ENCODE measurements at regions of chr18 and their contacts with region 1.

Region 1: DNA sequence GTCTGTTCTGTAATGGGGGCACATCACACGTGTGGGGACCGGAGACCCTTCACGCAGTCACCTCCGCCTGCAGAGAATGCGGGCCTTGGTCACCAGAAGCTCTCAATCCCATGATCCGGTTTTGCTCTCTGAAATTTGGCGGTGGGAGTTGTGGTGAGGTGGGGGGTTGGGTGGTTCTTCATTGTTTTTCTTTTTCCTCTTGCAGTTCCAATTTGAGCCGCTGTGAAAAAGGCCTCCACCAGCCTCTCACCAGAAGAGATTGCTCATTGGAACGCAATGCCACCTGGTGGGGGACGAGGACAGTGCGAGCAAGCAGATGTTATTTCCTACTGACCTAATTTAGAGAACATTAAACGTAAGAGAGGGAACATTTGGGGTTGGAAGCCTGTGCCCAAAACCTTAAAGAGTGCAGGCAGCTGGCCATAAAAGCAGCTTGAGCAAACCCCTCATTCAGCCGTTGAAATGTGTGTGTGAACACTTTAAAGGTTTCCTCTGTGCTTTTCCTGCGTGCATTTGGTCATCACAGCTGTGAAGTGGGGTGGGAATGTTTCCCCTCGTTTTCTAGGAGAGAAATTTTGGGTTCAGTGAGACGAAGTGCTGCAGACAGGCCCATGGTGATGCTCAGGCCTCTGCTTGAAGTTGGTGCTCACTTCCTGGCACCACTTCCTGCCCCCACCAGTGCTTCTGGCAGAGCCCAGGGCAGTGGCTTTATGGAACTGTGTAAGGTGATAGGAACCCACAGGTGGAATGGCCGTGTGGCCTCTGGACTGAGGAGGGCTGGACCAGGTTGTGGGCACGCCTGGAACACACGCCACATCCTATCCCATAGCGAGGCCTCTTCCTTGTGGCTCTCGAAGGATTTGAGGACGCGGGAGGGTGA is 61.7 kb downstream of the ZCCHC2 start:
- DNase-seq: peak; percentile 82 to 87 (median 85)
- ATAC-seq: peak; percentile 79 to 88 (median 85)
- H3K4me3 ChIP-seq: peak overlapping the region in 5 of 12 donors; percentile 10 to 37 (median 19)
- H3K27ac ChIP-seq: peak overlapping the region in 6 of 12 donors; percentile 27 to 69 (median 41)
- H3K4me1 ChIP-seq: peaks cover 0 to 25% (median 12%) of the 10 kb centered on the region in 12 donors
- H3K27me3 ChIP-seq: no peaks in the 10 kb centered on the region
- CTCF ChIP-seq: peak; percentile 79 to 98 (median 93)
- POLR2A ChIP-seq: no peak

Region 2: DNA sequence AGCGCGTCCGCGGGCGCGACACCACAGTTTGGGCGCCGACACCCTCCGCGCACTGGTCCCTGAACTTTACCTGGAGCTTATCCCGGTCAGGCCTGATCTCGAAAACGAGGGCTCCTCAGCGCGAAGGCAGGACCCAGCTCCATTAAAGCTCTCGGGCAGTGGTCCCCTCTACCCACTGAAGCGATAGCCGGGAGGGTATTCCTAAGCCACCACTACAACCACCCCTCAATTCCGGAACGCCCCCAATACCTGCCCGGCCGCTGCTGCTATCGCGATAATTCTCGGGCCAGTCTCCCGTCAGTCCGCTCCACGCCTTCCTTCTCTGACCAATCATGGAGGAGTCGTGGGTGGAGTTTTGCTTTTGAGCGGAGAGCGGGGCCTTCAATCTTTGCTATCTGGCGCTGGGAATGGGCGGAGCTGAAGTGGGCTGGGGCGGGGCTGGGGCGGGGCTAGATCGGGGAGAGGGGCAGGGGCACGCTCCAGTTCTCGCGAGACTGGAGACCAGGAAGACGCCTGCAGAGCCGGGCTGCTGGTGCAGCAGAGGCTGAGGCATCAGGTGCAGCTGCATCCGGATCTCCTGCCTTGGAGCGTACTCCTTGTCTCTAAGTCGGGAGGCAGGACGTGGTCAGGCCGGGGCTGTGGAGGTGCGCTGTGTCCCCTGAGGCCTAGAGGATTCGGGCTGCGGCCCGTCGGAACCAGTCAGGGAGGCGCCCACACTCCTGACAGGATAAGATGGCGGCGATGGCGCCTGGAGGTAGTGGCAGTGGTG is 397.5 kb before region 1 on chr18 and contains the starts of genes PIGN and RELCH:
- intact Hi-C with region 1: loop called in 7 of 10 experiments (anchors 5 to 10 kb)
- DNase-seq: peak; percentile 93 to 97 (median 96)
- ATAC-seq: peak; percentile 99 to 100 (median 99)
- H3K4me3 ChIP-seq: peak within 1 kb of the TSS; percentile 66 to 100 (median 90)
- H3K27ac ChIP-seq: peak within 1 kb of the TSS; percentile 37 to 87 (median 81)
- H3K4me1 ChIP-seq: peaks cover 0 to 51% (median 35%) of the 10 kb centered on the region in 12 donors
- H3K27me3 ChIP-seq: no peaks in the 10 kb centered on the region
- CTCF ChIP-seq: no peak
- POLR2A ChIP-seq: peak in 1 of 2 donors; percentile 74
- total RNA-seq, gene PIGN: 16.6 to 29.6 (median 23.3) TPM
- total RNA-seq, gene RELCH: 11.6 to 24.8 (median 15.2) TPM

Region 3: GRCh38 chr18:62324917-62325805 is 259.3 kb before region 1 on chr18 and contains the start of gene TNFRSF11A:
- intact Hi-C with region 1: loop called in 2 of 10 experiments (anchors 10 kb)
- DNase-seq: peak in 3 of 5 donors; percentile 27 to 61 (median 31)
- ATAC-seq: peak in 3 of 4 donors; percentile 31 to 73 (median 63)
- H3K4me3 ChIP-seq: peak within 1 kb of the TSS; percentile 28 to 61 (median 52)
- H3K27ac ChIP-seq: no peak within 1 kb of the TSS
- H3K4me1 ChIP-seq: peaks cover 4 to 61% (median 30%) of the 10 kb centered on the region in 12 donors
- H3K27me3 ChIP-seq: peaks cover 18 to 68% (median 45%) of the 10 kb centered on the region in 9 donors
- CTCF ChIP-seq: peak in 7 of 12 donors; percentile 12 to 36 (median 29)
- POLR2A ChIP-seq: no peak
- total RNA-seq, gene TNFRSF11A: 0.16 to 5.0 (median 1.5) TPM

Region 4: DNA sequence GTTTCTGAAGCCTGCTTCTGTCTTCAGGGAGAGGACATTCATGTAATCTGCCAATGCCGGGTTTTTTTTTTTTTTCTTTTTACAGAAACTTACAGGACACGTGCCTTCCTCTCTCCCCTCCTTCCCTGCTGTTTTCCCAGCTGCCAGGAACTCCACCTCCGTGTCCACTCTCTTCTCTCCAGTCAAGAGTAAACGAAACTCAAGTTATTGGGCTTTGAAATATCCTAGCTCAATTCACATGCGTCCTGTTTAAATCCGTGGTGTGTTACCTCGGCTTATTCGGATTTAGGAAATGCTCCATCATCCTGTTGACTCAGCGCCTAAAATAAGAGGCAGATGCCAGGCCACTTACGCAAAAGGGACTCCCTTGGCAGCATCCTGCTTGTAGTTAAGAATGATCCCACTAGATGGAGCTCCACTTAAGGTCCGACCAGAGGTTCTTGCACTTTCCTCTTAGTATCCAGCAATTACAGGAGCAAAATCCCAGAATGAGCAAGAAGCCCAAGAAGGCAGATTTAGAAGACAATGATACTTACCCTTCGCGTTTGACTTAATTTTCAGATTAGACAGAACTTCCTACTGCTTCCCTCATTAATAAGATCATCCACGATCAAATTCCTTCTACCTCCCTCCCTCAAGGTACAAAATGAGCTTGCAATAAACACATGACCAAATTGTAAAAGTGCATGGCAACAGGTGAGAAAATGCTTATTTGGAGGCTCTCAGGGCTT is 158.9 kb before region 1 on chr18:
- intact Hi-C with region 1: loop called in 8 of 10 experiments (anchors 1 to 5 kb)
- DNase-seq: peak in 4 of 5 donors; percentile 77 to 89 (median 86)
- ATAC-seq: peak; percentile 91 to 95 (median 92)
- H3K4me3 ChIP-seq: peak overlapping the region in 10 of 12 donors; percentile 20 to 54 (median 41)
- H3K27ac ChIP-seq: peak overlapping the region; percentile 25 to 93 (median 85)
- H3K4me1 ChIP-seq: peaks cover 0 to 32% (median 10%) of the 10 kb centered on the region in 12 donors
- H3K27me3 ChIP-seq: no peaks in the 10 kb centered on the region
- CTCF ChIP-seq: peak; percentile 72 to 92 (median 84)
- POLR2A ChIP-seq: no peak

Region 5: GRCh38 chr18:62537946-62538345 is 46.5 kb before region 1 on chr18:
- intact Hi-C with region 1: no loop called
- DNase-seq: no peak
- ATAC-seq: no peak
- H3K4me3 ChIP-seq: no peak overlapping the region
- H3K27ac ChIP-seq: no peak overlapping the region
- H3K4me1 ChIP-seq: peaks cover 0 to 29% (median 6%) of the 10 kb centered on the region in 12 donors
- H3K27me3 ChIP-seq: no peaks in the 10 kb centered on the region
- CTCF ChIP-seq: no peak
- POLR2A ChIP-seq: no peak

Region 6: DNA sequence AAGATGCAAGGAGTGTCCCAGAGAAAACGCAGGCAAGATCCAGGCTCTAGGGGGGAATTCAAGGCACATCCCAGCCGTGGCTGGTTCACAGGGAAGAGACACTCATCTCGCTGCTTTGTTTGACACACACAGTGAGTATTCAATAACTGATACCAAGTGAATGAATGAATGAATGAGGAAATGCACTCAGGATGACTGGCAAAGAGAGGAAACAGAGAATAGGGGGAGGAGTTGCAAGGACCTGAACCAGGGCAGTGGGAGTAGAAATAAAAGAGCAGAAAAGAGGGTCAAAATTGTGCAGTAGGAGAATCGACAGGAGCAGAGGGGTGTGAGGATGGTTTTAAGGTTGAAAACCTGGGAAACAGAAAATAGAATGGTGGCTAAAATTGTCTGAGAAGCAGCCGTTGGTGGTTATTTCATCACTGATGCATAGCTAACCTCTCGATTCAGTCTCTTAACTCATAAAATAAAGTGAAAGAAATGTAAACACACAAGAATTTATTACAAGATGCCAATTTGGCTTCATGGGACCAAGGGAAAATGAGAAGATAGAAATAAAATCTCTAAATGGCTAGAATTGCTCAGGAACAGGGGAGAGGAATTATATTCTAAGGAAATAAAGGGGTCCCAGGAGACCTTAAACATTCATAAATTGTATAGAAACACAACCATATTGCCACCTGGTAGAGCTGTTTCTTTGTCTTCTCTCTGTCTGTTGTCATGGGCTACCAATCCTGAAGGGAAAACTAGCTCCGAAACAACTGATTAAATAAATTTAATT is 67.0 kb after region 1 on chr18:
- intact Hi-C with region 1: no loop called
- DNase-seq: no peak
- ATAC-seq: no peak
- H3K4me3 ChIP-seq: peak overlapping the region in 3 of 12 donors; percentile 7 to 31 (median 15)
- H3K27ac ChIP-seq: no peak overlapping the region
- H3K4me1 ChIP-seq: peaks cover 0 to 11% (median 0%) of the 10 kb centered on the region in 12 donors
- H3K27me3 ChIP-seq: no peaks in the 10 kb centered on the region
- CTCF ChIP-seq: no peak
- POLR2A ChIP-seq: no peak

Region 7: DNA sequence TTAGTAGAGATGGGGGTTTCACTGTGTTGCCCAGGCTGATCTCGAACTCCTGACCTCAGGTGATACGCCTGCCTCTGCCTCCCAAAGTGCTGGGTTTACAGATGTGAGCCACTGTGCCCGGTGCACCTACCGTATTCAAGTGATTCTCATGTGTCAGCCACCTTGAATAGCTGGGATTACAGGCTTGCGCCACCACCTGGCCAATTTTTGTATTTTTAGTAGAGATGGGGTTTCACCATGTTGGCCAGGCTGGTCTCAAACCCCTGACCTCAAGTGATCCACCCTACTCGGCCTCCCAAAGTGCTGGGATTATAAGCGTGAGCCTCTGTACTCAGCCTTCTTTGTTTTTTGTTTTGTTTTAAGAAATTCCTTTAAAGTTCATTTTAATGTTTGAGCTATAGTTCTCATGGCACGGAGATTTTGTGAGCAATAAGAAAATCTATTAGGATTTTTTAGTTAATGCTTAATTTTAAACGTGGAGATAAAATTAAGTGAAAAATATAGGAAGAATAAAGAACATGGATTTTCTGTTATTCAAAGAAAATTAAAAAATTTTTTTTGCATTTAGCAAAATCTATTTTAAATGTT is 373.5 kb after region 1 on chr18:
- intact Hi-C with region 1: loop called in 2 of 10 experiments (anchors 10 kb)
- DNase-seq: peak in 3 of 5 donors; percentile 28 to 40 (median 34)
- ATAC-seq: peak in 3 of 4 donors; percentile 45 to 65 (median 58)
- H3K4me3 ChIP-seq: no peak overlapping the region
- H3K27ac ChIP-seq: no peak overlapping the region
- H3K4me1 ChIP-seq: peaks cover 0 to 15% (median 6%) of the 10 kb centered on the region in 12 donors
- H3K27me3 ChIP-seq: no peaks in the 10 kb centered on the region
- CTCF ChIP-seq: peak; percentile 24 to 62 (median 49)
- POLR2A ChIP-seq: no peak

Region 8: DNA sequence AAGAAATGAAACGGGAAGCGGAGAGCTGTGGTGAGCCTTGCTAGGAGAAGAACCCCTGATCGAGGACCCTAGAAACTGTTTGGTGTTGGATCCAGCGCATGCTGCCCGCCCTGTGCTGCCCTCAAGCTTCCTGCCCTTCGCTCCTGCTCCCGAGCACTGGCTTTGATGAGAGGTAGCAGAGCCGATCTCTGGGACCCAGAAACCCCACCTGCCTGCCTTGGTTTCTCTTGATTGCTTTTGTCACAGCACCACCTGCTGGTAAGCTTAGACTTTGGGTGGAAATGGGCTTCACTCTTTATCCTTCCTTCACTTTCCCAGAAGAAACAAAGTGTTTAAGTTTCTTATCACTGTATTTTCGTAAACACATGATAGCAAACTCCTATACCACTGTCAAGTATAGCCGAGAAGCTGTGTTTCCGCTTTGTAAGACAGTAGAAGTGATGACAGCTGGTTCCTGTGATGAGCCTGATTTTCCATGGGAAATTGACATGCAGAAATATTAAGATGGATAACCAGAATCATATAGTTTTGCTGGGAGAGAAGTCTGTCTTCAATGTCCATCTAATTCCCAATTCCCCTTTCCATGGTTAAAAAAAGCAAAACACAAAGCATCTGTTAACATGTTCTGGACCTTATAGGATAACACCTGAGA is 398.2 kb after region 1 on chr18:
- intact Hi-C with region 1: loop called (anchors 1 to 2 kb)
- DNase-seq: peak in 3 of 5 donors; percentile 45 to 60 (median 56)
- ATAC-seq: peak; percentile 32 to 82 (median 66)
- H3K4me3 ChIP-seq: peak overlapping the region in 9 of 12 donors; percentile 21 to 57 (median 44)
- H3K27ac ChIP-seq: no peak overlapping the region
- H3K4me1 ChIP-seq: peaks cover 0 to 11% (median 3%) of the 10 kb centered on the region in 12 donors
- H3K27me3 ChIP-seq: no peaks in the 10 kb centered on the region
- CTCF ChIP-seq: peak; percentile 64 to 87 (median 78)
- POLR2A ChIP-seq: no peak

Measured in heart left ventricle (tissue), 16 donors.